IMR-90 (cell line): ENCODE measurements at regions of chr9 and their contacts with region 1.

Region 1: GRCh38 chr9:124764774-124765438 is 6.2 kb downstream of the NR6A1 start:
- DNase-seq: no peak
- ATAC-seq: peak; percentile 37
- H3K4me3 ChIP-seq: no peak overlapping the region
- H3K27ac ChIP-seq: no peak overlapping the region
- H3K4me1 ChIP-seq: no peaks in the 10 kb centered on the region
- H3K27me3 ChIP-seq: peaks cover 75% of the 10 kb centered on the region
- CTCF ChIP-seq: peak; percentile 40
- POLR2A ChIP-seq: no peak
- RAD21 ChIP-seq: peak; percentile 42

Region 2: GRCh38 chr9:124369231-124369797 is 395.6 kb before region 1 on chr9:
- CTCF ChIA-PET with region 1: no interaction called
- POLR2A ChIA-PET with region 1: interaction called, 12 read pairs
- dilution Hi-C with region 1: no loop called
- in situ Hi-C with region 1: no loop called
- intact Hi-C with region 1: no loop called
- DNase-seq: no peak
- ATAC-seq: no peak
- H3K4me3 ChIP-seq: no peak overlapping the region
- H3K27ac ChIP-seq: no peak overlapping the region
- H3K4me1 ChIP-seq: peaks cover 16% of the 10 kb centered on the region
- H3K27me3 ChIP-seq: no peaks in the 10 kb centered on the region
- CTCF ChIP-seq: no peak
- POLR2A ChIP-seq: no peak
- RAD21 ChIP-seq: no peak